Natural killer cell (primary cell): ENCODE measurements at regions of chr19 and their contacts with region 1.

Region 1: GRCh38 chr19:39445265-39446111 is at the start of gene SUPT5H:
- DNase-seq: peak; percentile 96 to 100
- ATAC-seq: peak; percentile 93 to 98 (median 95)
- H3K4me3 ChIP-seq: peak within 1 kb of the TSS; percentile 99
- H3K4me3 Mint-ChIP-seq: peak within 1 kb of the TSS; percentile 98
- H3K27ac ChIP-seq: peak within 1 kb of the TSS; percentile 99
- H3K27ac Mint-ChIP-seq: peak within 1 kb of the TSS; percentile 97 to 100
- H3K4me1 ChIP-seq: peaks cover 56% of the 10 kb centered on the region
- H3K4me1 Mint-ChIP-seq: peaks cover 41 to 54% of the 10 kb centered on the region in 2 donors
- H3K27me3 ChIP-seq: no peaks in the 10 kb centered on the region
- H3K27me3 Mint-ChIP-seq: no peaks in the 10 kb centered on the region
- CTCF ChIP-seq: no peak
- total RNA-seq, gene SUPT5H: 228 to 256 (median 230) TPM

Region 2: DNA sequence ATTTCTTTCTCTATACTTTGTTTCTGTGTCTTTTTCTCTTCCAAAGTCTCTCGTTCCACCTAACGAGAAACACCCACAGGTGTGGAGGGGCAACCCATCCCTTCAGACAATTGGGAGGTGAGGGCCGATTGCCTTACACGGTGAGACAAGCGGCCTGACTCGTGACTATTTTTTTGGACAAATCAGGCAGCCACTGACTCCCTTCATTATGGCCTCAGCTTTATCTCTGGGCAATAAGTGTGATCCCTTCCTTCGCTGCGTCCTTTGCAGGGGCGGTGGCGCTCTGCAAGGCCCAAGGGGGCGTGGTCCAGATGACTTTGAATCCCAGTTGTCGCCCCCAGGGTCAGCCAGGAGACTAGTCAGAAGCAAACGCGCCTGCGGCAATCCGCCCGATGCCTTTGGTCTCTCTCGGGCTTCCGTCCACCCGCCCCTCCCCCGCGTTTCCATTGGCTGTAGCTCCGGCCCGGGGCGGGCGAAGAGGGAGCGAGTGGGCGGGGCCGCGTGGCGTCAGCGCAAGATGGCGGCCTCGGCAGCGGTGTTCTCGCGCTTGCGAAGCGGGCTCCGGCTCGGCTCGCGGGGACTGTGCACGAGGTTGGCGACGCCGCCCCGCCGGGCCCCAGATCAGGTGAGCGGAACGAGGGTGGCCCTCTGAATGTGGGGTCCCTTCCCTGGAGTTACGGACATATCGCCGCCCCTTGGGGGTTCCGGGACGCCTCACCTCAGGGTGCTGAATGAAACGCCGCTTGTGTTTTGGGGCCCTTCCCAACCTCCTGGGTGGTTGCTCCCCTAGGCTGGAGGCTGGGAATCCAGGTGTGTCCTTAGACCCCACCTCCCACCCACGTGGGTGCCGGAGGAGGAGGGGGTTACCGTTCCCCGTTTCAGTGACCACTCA is 35.1 kb after region 1 on chr19 and contains the start of gene TIMM50:
- intact Hi-C with region 1: loop called (anchors 1 kb)
- DNase-seq: peak; percentile 96 to 97
- ATAC-seq: peak; percentile 98 to 99 (median 99)
- H3K4me3 ChIP-seq: peak within 1 kb of the TSS; percentile 99
- H3K4me3 Mint-ChIP-seq: peak within 1 kb of the TSS; percentile 93
- H3K27ac ChIP-seq: peak within 1 kb of the TSS; percentile 77
- H3K27ac Mint-ChIP-seq: peak within 1 kb of the TSS; percentile 92 to 94
- H3K4me1 ChIP-seq: peaks cover 19% of the 10 kb centered on the region
- H3K4me1 Mint-ChIP-seq: peaks cover 20 to 22% of the 10 kb centered on the region in 2 donors
- H3K27me3 ChIP-seq: no peaks in the 10 kb centered on the region
- H3K27me3 Mint-ChIP-seq: no peaks in the 10 kb centered on the region
- CTCF ChIP-seq: no peak
- total RNA-seq, gene TIMM50: 50.1 to 67.2 (median 60.8) TPM